Activated CD8-positive, alpha-beta T cell treated with anti-CD3 and anti-CD28 coated beads, Interleukin-2, amount 10 ng/mL, durations not matched to agents 7 days and 5 days (primary cell): ENCODE measurements at regions of chr7 and their contacts with region 1.

Region 1: GRCh38 chr7:148940702-148941597 is 56.9 kb upstream of the EZH2 start:
- DNase-seq: peak; percentile 77
- ATAC-seq: peak; percentile 82
- H3K4me3 Mint-ChIP-seq: peak overlapping the region; percentile 97
- H3K27ac Mint-ChIP-seq: peak overlapping the region; percentile 98
- H3K4me1 Mint-ChIP-seq: peaks cover 15% of the 10 kb centered on the region
- H3K27me3 Mint-ChIP-seq: no peaks in the 10 kb centered on the region

Region 2: GRCh38 chr7:148698397-148699023 is 242.4 kb before region 1 on chr7 and contains the start of gene CUL1:
- CTCF ChIA-PET with region 1: interaction called, 4 read pairs
- POLR2A ChIA-PET with region 1: interaction called, 10 read pairs
- DNase-seq: peak; percentile 85
- ATAC-seq: peak; percentile 87
- H3K4me3 Mint-ChIP-seq: peak within 1 kb of the TSS; percentile 90
- H3K27ac Mint-ChIP-seq: peak within 1 kb of the TSS; percentile 90
- H3K4me1 Mint-ChIP-seq: peaks cover 52% of the 10 kb centered on the region
- H3K27me3 Mint-ChIP-seq: peaks cover 11% of the 10 kb centered on the region
- total RNA-seq, gene CUL1: 55.8 to 57.6 TPM

Region 3: DNA sequence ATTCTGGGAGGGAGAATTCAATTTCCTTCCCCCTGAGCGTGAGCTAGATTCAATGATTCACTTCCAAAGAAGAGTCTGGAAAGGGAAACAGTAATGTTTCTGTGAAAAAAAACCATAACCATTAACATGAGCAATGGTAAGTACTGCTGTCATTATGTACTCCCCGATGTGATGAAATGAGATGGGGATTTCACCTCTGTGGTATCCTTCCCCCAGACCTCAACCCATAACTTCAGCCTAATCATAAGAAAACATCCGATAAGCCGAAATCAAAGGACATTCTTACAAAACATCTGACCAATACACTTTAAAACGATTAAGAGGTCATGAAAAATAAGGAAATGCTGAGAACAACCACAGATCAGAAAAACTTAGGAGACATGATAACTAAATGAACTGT is 84.1 kb before region 1 on chr7:
- CTCF ChIA-PET with region 1: interaction called, 23 read pairs
- POLR2A ChIA-PET with region 1: no interaction called
- DNase-seq: no peak
- ATAC-seq: peak; percentile 5
- H3K4me3 Mint-ChIP-seq: no peak overlapping the region
- H3K27ac Mint-ChIP-seq: no peak overlapping the region
- H3K4me1 Mint-ChIP-seq: peaks cover 35% of the 10 kb centered on the region
- H3K27me3 Mint-ChIP-seq: no peaks in the 10 kb centered on the region

Region 4: GRCh38 chr7:148884299-148885022 is 56.5 kb before region 1 on chr7:
- CTCF ChIA-PET with region 1: interaction called, 26 read pairs
- POLR2A ChIA-PET with region 1: interaction called, 58 read pairs
- DNase-seq: peak; percentile 95
- ATAC-seq: peak; percentile 93
- H3K4me3 Mint-ChIP-seq: peak overlapping the region; percentile 92
- H3K27ac Mint-ChIP-seq: peak overlapping the region; percentile 99
- H3K4me1 Mint-ChIP-seq: peaks cover 36% of the 10 kb centered on the region
- H3K27me3 Mint-ChIP-seq: no peaks in the 10 kb centered on the region

Region 5: GRCh38 chr7:148914208-148914777 is 26.7 kb before region 1 on chr7:
- CTCF ChIA-PET with region 1: interaction called, 36 read pairs
- POLR2A ChIA-PET with region 1: interaction called, 52 read pairs
- DNase-seq: peak; percentile 49
- ATAC-seq: peak; percentile 35
- H3K4me3 Mint-ChIP-seq: no peak overlapping the region
- H3K27ac Mint-ChIP-seq: peak overlapping the region; percentile 89
- H3K4me1 Mint-ChIP-seq: peaks cover 55% of the 10 kb centered on the region
- H3K27me3 Mint-ChIP-seq: no peaks in the 10 kb centered on the region